Mammary epithelial cell (primary cell): ENCODE measurements at regions of chr20 and their contacts with region 1.

Region 1: GRCh38 chr20:16761305-16761829 is 13.2 kb downstream of the OTOR start:
- DNase-seq: peak; percentile 47
- H3K4me3 ChIP-seq: no peak overlapping the region
- H3K27ac ChIP-seq: no peak overlapping the region
- H3K4me1 ChIP-seq: peaks cover 3% of the 10 kb centered on the region
- H3K27me3 ChIP-seq: no peaks in the 10 kb centered on the region
- CTCF ChIP-seq: peak; percentile 60 to 76

Region 2: DNA sequence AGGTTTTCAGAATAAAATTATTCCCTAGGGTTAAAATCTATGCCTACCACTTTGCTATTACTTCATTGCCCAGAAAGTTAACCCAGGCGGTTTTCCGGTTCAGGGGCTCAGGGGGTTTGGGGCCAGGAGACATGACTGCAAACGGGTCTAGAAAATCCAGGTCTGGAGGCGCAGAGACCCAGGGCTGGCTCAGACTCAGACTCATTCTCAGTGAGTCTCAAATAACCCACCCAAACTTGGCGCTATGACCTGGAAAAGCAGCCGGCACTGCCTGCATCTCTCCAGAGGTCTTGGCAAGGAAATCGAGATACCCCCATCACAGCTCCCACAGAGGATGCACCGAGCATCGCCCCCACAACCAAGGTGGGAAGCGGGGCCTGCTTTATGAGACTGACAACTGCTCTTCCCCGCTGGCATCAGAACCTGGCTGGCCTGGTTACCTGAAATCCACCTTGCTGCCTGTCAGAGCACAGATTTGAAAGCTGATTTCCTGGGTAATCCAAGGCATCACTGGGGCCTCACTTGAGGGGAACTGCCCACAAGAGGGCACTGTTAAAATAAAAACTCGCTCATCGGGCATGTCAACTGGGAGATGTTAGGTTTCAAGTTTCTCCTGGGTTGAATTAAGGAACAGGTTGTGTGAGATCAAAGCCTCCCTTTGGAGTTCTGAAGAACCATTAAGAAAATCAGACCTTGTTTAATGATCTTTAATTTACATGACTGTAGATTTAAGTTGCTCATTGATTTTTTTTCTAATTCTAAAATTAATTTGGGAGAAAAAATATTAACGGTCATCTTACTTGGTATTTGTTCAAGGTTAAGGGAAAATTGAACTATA is 243.2 kb before region 1 on chr20:
- CTCF ChIA-PET with region 1: interaction called, 4 read pairs
- dilution Hi-C with region 1: no loop called
- in situ Hi-C with region 1: no loop called
- intact Hi-C with region 1: loop called (anchors 1 kb)
- DNase-seq: peak; percentile 47
- H3K4me3 ChIP-seq: no peak overlapping the region
- H3K27ac ChIP-seq: no peak overlapping the region
- H3K4me1 ChIP-seq: no peaks in the 10 kb centered on the region
- H3K27me3 ChIP-seq: no peaks in the 10 kb centered on the region
- CTCF ChIP-seq: peak; percentile 51 to 70

Region 3: DNA sequence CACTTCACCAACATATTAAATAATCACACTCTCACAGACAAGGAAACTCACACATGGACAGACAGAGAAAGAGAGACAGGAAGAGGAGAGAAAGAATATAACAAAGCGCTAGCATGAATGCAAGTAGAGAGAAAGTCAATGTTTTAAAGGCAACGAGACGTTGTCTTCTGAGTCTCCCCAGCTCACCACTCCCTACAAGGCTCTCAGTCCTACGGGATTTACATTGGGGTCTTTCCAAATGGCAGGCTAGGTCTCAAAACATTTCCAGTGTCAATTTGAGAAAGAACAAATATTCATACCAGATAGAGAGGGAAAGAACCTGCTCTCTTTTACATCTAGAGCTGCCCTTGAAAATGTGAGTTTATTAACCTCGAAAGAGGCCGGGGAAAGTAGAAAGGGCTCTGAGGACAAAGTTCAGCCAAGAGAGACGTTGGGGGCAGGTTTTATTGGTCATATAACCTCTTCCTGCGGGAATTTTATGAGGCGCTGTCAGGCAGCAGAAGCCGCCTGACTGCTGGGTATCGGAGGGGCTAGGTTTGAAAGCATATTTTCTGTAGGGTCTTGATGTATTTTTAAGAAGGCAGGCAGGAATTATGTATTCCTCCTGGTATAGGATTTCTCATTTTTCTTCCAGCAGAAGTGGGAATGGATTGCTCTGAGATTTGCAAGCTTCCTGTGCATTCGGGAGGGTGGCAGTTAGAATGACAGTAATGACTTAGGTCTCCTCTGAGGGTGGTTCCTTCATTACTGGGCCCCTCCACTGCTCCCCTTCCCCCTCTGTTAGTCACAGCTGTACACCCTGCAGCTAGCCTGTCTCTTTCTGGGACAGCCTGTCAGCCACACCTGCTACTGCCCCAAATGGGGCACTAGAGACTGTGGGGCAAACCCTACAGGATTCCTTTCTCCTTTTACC is 153.7 kb before region 1 on chr20:
- CTCF ChIA-PET with region 1: no interaction called
- dilution Hi-C with region 1: loop called (anchors 5 kb)
- in situ Hi-C with region 1: no loop called
- intact Hi-C with region 1: no loop called
- DNase-seq: no peak
- H3K4me3 ChIP-seq: no peak overlapping the region
- H3K27ac ChIP-seq: no peak overlapping the region
- H3K4me1 ChIP-seq: no peaks in the 10 kb centered on the region
- H3K27me3 ChIP-seq: no peaks in the 10 kb centered on the region
- CTCF ChIP-seq: no peak

Region 4: DNA sequence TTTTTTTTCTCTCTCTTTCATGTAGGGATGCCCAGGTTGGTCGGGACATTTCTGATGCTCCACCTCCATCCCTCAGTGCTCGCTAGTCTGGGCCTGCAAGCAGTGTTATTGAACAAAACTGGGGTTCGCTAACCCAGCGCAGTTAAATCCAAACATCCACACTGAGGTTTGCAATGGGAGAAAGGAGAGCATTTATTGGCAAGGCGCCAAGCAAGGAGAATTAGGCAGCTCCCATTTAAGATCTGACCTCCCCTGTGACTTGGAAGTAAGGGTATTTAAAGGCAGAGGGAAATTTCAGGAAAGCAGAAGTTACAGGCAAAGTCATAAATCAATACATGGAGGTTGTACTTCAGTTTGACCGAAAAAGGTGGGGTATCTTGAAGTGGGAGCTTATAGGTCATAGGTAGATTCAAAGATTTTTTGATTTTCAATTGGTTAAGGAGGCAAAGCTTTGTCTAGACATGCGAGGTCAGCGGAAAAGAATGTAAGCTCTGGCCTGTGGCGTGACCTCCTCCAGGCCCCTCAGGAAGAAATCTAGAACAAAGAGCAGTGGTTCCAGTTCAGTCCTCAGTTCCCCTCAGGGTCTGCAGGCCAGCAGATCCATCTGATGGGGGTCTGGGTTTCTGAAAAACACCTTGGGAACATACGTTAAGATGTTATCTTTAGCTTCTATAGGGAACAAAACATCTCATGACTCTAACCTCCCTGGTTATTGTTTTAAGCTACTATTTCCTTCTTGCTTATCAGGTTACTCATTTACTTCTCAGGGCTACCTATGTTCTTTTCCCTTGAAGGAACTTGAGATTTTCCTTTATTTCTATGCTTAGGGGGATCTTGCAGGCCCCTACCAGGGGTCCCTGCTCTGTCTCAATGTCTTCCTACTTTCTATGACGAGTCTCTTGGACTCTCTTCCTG is 122.1 kb before region 1 on chr20:
- CTCF ChIA-PET with region 1: no interaction called
- dilution Hi-C with region 1: no loop called
- in situ Hi-C with region 1: no loop called
- intact Hi-C with region 1: loop called (anchors 5 kb)
- DNase-seq: no peak
- H3K4me3 ChIP-seq: no peak overlapping the region
- H3K27ac ChIP-seq: no peak overlapping the region
- H3K4me1 ChIP-seq: no peaks in the 10 kb centered on the region
- H3K27me3 ChIP-seq: no peaks in the 10 kb centered on the region
- CTCF ChIP-seq: no peak

Region 5: GRCh38 chr20:16701296-16701695 is 60.1 kb before region 1 on chr20:
- CTCF ChIA-PET with region 1: no interaction called
- dilution Hi-C with region 1: no loop called
- in situ Hi-C with region 1: no loop called
- intact Hi-C with region 1: loop called (anchors 1 kb)
- DNase-seq: peak; percentile 6
- H3K4me3 ChIP-seq: no peak overlapping the region
- H3K27ac ChIP-seq: no peak overlapping the region
- H3K4me1 ChIP-seq: no peaks in the 10 kb centered on the region
- H3K27me3 ChIP-seq: peaks cover 2% of the 10 kb centered on the region
- CTCF ChIP-seq: peak; percentile 22 to 42

Region 6: GRCh38 chr20:17137692-17138091 is 376.3 kb after region 1 on chr20:
- CTCF ChIA-PET with region 1: no interaction called
- dilution Hi-C with region 1: no loop called
- in situ Hi-C with region 1: no loop called
- intact Hi-C with region 1: no loop called
- DNase-seq: no peak
- H3K4me3 ChIP-seq: no peak overlapping the region
- H3K27ac ChIP-seq: no peak overlapping the region
- H3K4me1 ChIP-seq: no peaks in the 10 kb centered on the region
- H3K27me3 ChIP-seq: no peaks in the 10 kb centered on the region
- CTCF ChIP-seq: no peak